AG04450 (cell line): ENCODE measurements at regions of chr15 and their contacts with region 1.

Region 1: GRCh38 chr15:71374607-71375352 is 259.5 kb downstream of the THSD4 start:
- DNase-seq: peak; percentile 61
- H3K4me3 ChIP-seq: no peak overlapping the region
- H3K27ac ChIP-seq: peak overlapping the region; percentile 80
- H3K27me3 ChIP-seq: no peaks in the 10 kb centered on the region
- CTCF ChIP-seq: no peak

Region 2: DNA sequence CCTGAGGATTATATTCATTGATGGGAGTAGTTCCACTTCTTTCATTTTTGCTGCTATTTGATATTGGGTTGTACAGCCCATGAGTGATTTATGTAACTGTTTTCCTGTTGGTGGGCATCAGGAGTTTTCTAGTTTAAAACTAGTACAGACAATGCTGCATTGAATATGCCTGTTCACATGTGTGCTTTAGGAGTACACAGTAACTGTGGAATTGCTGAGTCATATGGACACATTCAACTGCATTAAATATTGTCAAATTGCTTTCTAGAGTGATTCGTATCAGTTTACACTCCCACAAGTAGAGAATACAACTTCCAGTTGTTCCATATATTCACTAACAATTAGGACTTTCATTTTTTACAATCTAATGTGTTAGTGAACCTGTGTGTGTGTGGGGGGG is 319.3 kb before region 1 on chr15:
- CTCF ChIA-PET with region 1: no interaction called
- POLR2A ChIA-PET with region 1: interaction called, 13 read pairs
- DNase-seq: no peak
- H3K4me3 ChIP-seq: no peak overlapping the region
- H3K27ac ChIP-seq: no peak overlapping the region
- H3K27me3 ChIP-seq: no peaks in the 10 kb centered on the region
- CTCF ChIP-seq: no peak

Region 3: GRCh38 chr15:71294886-71295638 is 79.7 kb before region 1 on chr15:
- CTCF ChIA-PET with region 1: no interaction called
- POLR2A ChIA-PET with region 1: no interaction called
- DNase-seq: peak; percentile 98
- H3K4me3 ChIP-seq: no peak overlapping the region
- H3K27ac ChIP-seq: peak overlapping the region; percentile 99
- H3K27me3 ChIP-seq: no peaks in the 10 kb centered on the region
- CTCF ChIP-seq: no peak

Region 4: DNA sequence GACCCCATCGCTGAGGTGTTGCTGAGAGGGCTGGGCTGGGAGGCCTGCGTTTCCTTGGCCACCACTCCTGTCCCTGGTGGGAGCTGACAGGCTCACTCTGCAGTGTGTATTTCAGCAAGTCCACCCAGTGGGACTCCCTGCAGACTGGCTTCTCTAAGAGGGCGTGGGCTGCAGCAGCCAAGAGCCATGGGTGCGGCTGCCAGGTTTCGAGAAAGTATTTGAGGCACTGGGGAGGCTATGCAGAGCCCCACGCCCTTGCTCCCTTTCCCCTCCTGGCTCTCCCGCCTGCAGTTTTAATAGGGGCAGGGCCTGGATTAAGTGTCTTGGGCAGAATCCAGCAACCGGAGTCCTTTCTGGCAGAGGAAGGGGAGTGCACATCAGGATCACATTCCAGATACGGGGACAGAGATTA is 17.5 kb before region 1 on chr15:
- CTCF ChIA-PET with region 1: no interaction called
- POLR2A ChIA-PET with region 1: no interaction called
- DNase-seq: no peak
- H3K4me3 ChIP-seq: no peak overlapping the region
- H3K27ac ChIP-seq: no peak overlapping the region
- H3K27me3 ChIP-seq: no peaks in the 10 kb centered on the region
- CTCF ChIP-seq: no peak

Region 5: DNA sequence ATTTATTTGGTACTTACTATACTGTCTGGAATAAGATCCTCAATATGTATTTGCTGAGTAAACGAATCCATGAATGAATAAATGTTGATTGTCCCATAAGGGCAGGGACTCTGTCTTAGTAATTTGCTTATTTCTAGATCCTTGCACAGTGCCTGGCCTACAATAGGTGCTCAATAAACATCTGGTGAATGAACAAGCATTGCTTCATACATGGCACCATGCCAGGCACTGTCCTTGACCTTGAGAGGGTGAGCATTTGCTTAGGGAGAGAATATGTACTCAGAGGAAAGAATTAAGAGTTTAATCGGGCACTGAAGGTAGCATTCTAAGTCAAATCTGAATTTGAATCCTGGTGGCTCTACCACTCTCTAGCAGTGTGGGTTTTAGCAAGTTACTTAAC is 22.6 kb after region 1 on chr15:
- CTCF ChIA-PET with region 1: no interaction called
- POLR2A ChIA-PET with region 1: no interaction called
- DNase-seq: no peak
- H3K4me3 ChIP-seq: no peak overlapping the region
- H3K27ac ChIP-seq: no peak overlapping the region
- H3K27me3 ChIP-seq: no peaks in the 10 kb centered on the region
- CTCF ChIP-seq: no peak

Region 6: DNA sequence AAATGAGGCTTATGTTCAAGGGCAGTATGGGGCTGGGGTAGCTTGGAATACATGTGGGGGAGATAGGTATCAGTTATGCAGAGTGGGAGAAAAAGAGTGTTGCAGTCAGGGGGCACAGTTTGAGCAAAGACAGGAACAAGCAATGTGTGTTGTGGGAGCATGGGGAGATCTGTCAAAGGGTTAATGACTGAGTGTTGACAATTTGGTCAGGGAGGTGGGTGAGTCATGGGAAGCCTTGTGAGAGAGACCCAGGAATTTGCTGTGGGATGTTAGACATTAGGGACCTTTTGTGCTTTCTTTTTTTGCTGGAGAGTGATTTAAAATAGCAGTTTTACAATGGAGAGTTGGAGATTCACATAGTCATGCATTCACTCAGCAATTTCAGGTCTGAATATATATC is 214.0 kb after region 1 on chr15:
- CTCF ChIA-PET with region 1: no interaction called
- POLR2A ChIA-PET with region 1: no interaction called
- DNase-seq: peak; percentile 32
- H3K4me3 ChIP-seq: no peak overlapping the region
- H3K27ac ChIP-seq: no peak overlapping the region
- H3K27me3 ChIP-seq: no peaks in the 10 kb centered on the region
- CTCF ChIP-seq: no peak